CD4-positive, alpha-beta memory T cell (primary cell): ENCODE measurements at regions of chr10 and their contacts with region 1.

Region 1: GRCh38 chr10:124388823-124389612 is 29.7 kb downstream of the OAT start:
- DNase-seq: peak; percentile 86 to 92 (median 90)
- H3K4me3 ChIP-seq: peak overlapping the region in 1 of 2 donors; percentile 71
- H3K4me3 Mint-ChIP-seq: peak overlapping the region in 6 of 8 donors; percentile 27 to 73 (median 66)
- H3K27ac ChIP-seq: peak overlapping the region; percentile 29
- H3K27ac Mint-ChIP-seq: peak overlapping the region in 1 of 7 donors; percentile 30
- H3K4me1 ChIP-seq: peaks cover 11% of the 10 kb centered on the region
- H3K4me1 Mint-ChIP-seq: peaks cover 0 to 5% (median 2%) of the 10 kb centered on the region in 4 donors
- H3K27me3 ChIP-seq: no peaks in the 10 kb centered on the region
- H3K27me3 Mint-ChIP-seq: peaks cover 0 to 7% of the 10 kb centered on the region in 2 donors

Region 2: DNA sequence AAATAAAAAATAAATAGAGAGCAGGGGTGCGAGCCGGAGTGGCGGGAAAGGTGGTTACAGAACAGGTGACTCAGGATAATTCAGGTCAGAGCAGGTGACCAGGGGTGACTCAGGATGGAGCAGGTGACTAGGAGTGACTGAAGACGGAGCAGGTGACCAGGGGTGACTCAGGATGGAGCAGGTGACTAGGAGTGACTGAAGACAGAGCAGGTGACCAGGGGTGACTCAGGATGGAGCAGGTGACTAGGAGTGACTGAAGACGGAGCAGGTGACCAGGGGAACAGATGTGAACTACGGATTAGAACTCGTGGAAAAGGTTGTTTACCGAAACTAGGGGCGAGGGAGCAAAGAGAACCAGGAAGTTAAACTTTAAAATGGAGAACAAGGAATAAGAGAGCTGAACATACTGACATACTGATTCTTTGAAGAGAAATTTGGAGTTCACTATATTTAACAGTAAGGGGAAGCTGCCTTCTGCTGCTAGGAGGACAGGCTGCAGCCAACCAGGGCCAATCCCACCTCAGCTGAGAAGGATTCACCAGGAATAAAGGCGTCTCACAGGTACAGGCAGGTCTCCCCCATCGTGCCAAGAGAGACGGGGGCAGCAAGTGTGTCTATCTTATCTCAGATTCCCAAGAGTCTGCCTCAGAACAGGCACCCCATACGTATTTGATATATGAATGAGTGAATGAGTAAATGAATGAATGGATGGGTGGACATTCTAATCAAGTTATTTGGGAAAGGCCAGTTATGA is 598.7 kb before region 1 on chr10:
- CTCF ChIA-PET with region 1: no interaction called
- POLR2A ChIA-PET with region 1: no interaction called
- intact Hi-C with region 1: no loop called
- DNase-seq: no peak
- H3K4me3 ChIP-seq: no peak overlapping the region
- H3K4me3 Mint-ChIP-seq: no peak overlapping the region
- H3K27ac ChIP-seq: no peak overlapping the region
- H3K27ac Mint-ChIP-seq: no peak overlapping the region
- H3K4me1 ChIP-seq: no peaks in the 10 kb centered on the region
- H3K4me1 Mint-ChIP-seq: no peaks in the 10 kb centered on the region
- H3K27me3 ChIP-seq: no peaks in the 10 kb centered on the region
- H3K27me3 Mint-ChIP-seq: peaks cover 6% of the 10 kb centered on the region in 2 donors

Region 3: GRCh38 chr10:123994417-123995081 is 394.5 kb before region 1 on chr10:
- CTCF ChIA-PET with region 1: interaction called, 296 read pairs
- POLR2A ChIA-PET with region 1: interaction called, 16 read pairs
- intact Hi-C with region 1: loop called (anchors 1 kb)
- DNase-seq: peak; percentile 65 to 79 (median 70)
- H3K4me3 ChIP-seq: no peak overlapping the region
- H3K4me3 Mint-ChIP-seq: peak overlapping the region in 7 of 8 donors; percentile 49 to 82 (median 73)
- H3K27ac ChIP-seq: no peak overlapping the region
- H3K27ac Mint-ChIP-seq: peak overlapping the region in 1 of 7 donors; percentile 79
- H3K4me1 ChIP-seq: peaks cover 14% of the 10 kb centered on the region
- H3K4me1 Mint-ChIP-seq: peaks cover 4 to 17% (median 10%) of the 10 kb centered on the region in 4 donors
- H3K27me3 ChIP-seq: peaks cover 9% of the 10 kb centered on the region
- H3K27me3 Mint-ChIP-seq: peaks cover 38 to 62% of the 10 kb centered on the region in 2 donors

Region 4: DNA sequence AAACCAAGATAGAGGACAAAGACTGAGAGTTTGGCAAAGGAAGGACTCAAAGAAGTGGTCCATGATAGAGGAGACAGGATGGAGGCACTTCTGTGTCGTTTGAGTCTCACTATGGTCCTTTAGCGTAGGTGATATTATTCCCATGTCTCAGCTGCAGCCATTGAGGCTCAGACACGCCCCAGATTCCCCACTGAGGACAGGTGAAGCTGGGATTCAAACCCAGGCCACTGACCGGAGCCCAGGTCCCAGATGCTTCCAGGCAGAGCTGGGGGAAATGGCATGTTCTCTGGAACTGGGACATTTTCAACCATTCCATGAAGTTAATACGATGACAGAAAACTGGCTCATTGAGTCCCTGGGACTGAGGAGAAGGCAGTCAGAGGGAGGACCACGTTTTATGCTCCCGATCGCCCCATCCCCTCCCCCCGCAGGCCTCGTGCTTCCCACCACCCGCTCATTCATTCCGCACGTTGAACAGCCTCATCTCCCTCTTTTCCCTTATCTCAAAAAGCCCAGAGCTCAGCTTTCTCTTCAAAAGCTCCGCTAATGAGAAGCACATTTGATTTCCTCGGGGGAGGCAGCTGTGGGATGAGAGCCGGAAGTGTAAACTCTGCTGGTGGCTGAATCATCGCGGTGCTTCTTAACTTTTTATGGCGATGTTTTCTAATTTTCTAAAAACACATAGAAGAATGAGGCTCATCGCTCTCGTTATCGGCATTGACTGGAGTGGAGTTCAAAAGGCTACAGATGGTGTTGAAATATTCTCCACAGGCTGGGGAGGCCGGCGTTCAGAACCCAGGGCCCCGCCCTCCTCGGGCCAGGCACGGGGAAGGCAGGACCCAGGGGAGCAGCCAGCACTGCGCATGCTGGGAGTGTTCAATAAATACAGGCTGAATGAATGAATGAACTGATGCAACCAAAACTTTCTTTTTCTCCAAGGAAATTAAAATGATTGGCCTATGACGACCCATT is 34.3 kb before region 1 on chr10:
- CTCF ChIA-PET with region 1: interaction called, 12 read pairs
- POLR2A ChIA-PET with region 1: no interaction called
- intact Hi-C with region 1: no loop called
- DNase-seq: peak in 4 of 5 donors; percentile 7 to 13 (median 8)
- H3K4me3 ChIP-seq: peak overlapping the region; percentile 33 to 51
- H3K4me3 Mint-ChIP-seq: peak overlapping the region; percentile 84 to 89 (median 86)
- H3K27ac ChIP-seq: no peak overlapping the region
- H3K27ac Mint-ChIP-seq: peak overlapping the region in 5 of 7 donors; percentile 57 to 86 (median 79)
- H3K4me1 ChIP-seq: no peaks in the 10 kb centered on the region
- H3K4me1 Mint-ChIP-seq: peaks cover 3 to 12% (median 7%) of the 10 kb centered on the region in 4 donors
- H3K27me3 ChIP-seq: no peaks in the 10 kb centered on the region
- H3K27me3 Mint-ChIP-seq: peaks cover 0 to 6% of the 10 kb centered on the region in 2 donors

Region 5: GRCh38 chr10:124378881-124379471 is 10.0 kb before region 1 on chr10:
- CTCF ChIA-PET with region 1: interaction called, 23 read pairs
- POLR2A ChIA-PET with region 1: no interaction called
- intact Hi-C with region 1: no loop called
- DNase-seq: no peak
- H3K4me3 ChIP-seq: no peak overlapping the region
- H3K4me3 Mint-ChIP-seq: no peak overlapping the region
- H3K27ac ChIP-seq: no peak overlapping the region
- H3K27ac Mint-ChIP-seq: no peak overlapping the region
- H3K4me1 ChIP-seq: no peaks in the 10 kb centered on the region
- H3K4me1 Mint-ChIP-seq: peaks cover 0 to 2% (median 0%) of the 10 kb centered on the region in 4 donors
- H3K27me3 ChIP-seq: peaks cover 26% of the 10 kb centered on the region
- H3K27me3 Mint-ChIP-seq: peaks cover 35 to 42% of the 10 kb centered on the region in 2 donors

Region 6: DNA sequence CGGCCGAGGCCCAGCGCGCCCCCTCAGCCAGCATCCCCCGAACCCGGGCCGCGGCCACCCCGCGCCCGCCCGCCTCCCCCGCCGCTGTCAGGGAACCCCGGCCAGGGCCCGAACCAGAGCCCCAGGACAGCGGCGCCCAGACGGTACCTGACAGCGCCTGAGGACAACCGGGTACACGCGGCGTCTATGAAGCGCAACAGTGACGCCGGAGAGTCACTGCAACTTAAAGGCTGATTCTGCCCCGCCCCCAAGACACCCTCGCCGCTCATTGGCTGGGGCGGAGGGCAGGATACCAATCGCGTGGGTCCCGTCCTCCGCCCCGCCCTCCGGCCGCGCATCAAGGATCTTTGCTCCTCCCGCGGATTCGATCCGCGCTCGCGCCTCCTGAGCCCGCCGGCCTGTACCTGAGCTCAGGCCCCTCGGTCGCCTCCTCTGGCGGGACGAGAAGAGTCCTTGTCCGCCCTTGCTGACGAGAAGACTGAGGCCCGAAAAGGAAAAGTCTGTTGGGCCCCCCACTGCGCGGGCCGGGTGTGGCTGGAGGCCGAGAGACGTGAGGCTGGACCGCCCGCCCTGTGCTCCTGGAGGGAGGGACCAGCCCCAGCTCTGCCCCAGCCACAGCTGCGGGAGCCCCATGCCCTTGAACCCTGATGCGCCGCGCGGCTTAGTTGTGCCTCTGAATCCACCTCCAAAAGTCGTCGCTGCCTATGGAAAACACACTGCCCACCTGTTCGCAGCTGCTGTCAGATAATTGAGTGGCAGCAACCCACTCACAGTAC is 29.9 kb after region 1 on chr10 and contains the start of gene OAT:
- CTCF ChIA-PET with region 1: interaction called, 22 read pairs
- POLR2A ChIA-PET with region 1: interaction called, 3 read pairs
- intact Hi-C with region 1: loop called (anchors 1 kb)
- DNase-seq: peak; percentile 94 to 95 (median 95)
- H3K4me3 ChIP-seq: peak within 1 kb of the TSS; percentile 52 to 66
- H3K4me3 Mint-ChIP-seq: peak within 1 kb of the TSS; percentile 84 to 95 (median 87)
- H3K27ac ChIP-seq: peak within 1 kb of the TSS; percentile 70
- H3K27ac Mint-ChIP-seq: peak within 1 kb of the TSS; percentile 74 to 91 (median 84)
- H3K4me1 ChIP-seq: peaks cover 13% of the 10 kb centered on the region
- H3K4me1 Mint-ChIP-seq: peaks cover 4 to 36% (median 20%) of the 10 kb centered on the region in 4 donors
- H3K27me3 ChIP-seq: no peaks in the 10 kb centered on the region
- H3K27me3 Mint-ChIP-seq: peaks cover 4 to 8% of the 10 kb centered on the region in 2 donors
- total RNA-seq, gene OAT: 34.8 to 39.3 TPM

Region 7: DNA sequence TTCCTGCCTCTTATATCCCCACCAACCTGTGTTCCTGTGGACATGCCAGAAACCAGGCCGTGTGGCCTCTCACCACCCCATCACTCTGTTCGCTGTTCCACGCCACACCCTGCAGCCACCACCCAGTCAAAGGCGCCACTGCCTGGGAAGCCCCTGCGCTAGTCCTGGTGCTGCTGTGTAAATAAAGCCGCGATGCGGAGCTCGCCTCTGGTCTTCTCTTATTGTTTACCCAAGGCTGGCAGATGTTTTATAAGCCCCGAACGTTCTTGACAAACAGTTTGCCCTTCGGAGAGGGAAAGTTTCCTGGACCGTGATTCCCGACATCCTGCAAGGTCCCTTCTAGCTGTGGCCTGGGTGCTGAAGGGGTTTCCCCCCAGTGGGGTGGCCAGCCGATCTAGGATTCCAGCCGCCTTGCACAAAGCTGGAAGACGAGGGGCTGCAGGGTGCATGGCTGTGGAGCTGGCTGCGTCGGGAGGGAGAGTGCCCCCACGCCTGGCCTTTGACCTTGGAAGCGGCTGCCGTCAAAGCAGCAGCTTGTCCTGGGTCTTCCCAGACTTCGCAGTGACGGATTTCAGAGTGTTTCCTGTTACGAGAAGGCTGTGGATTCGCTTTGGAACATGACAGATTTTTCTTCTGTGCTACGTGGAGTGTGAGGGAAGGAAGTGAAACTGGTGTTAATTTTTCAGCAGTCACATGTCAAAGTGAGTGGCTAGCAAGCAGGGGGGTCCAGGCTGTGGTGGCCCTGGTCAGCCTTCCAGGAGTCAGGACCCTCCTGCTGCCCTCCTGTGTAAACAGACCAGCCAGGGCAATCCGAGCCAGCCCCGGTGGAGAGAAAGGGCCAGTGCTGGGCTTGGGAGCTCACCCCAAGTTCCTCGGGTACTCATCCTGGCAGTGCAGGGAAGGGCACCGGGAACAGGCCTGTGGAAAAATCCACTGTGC is 134.2 kb after region 1 on chr10:
- CTCF ChIA-PET with region 1: no interaction called
- POLR2A ChIA-PET with region 1: no interaction called
- intact Hi-C with region 1: no loop called
- DNase-seq: no peak
- H3K4me3 ChIP-seq: no peak overlapping the region
- H3K4me3 Mint-ChIP-seq: no peak overlapping the region
- H3K27ac ChIP-seq: no peak overlapping the region
- H3K27ac Mint-ChIP-seq: peak overlapping the region in 1 of 7 donors; percentile 85
- H3K4me1 ChIP-seq: no peaks in the 10 kb centered on the region
- H3K4me1 Mint-ChIP-seq: no peaks in the 10 kb centered on the region
- H3K27me3 ChIP-seq: no peaks in the 10 kb centered on the region
- H3K27me3 Mint-ChIP-seq: no peaks in the 10 kb centered on the region

Region 8: GRCh38 chr10:124688889-124689670 is 300.1 kb after region 1 on chr10:
- CTCF ChIA-PET with region 1: no interaction called
- POLR2A ChIA-PET with region 1: no interaction called
- intact Hi-C with region 1: no loop called
- DNase-seq: peak; percentile 50 to 81 (median 52)
- H3K4me3 ChIP-seq: no peak overlapping the region
- H3K4me3 Mint-ChIP-seq: peak overlapping the region in 7 of 8 donors; percentile 9 to 88 (median 76)
- H3K27ac ChIP-seq: peak overlapping the region; percentile 42
- H3K27ac Mint-ChIP-seq: peak overlapping the region; percentile 87 to 98 (median 91)
- H3K4me1 ChIP-seq: peaks cover 95% of the 10 kb centered on the region
- H3K4me1 Mint-ChIP-seq: peaks cover 59 to 94% (median 79%) of the 10 kb centered on the region in 4 donors
- H3K27me3 ChIP-seq: no peaks in the 10 kb centered on the region
- H3K27me3 Mint-ChIP-seq: no peaks in the 10 kb centered on the region